Activated naive CD4-positive, alpha-beta T cell treated with anti-CD3 and anti-CD28 coated beads for 36 hours (primary cell): ENCODE measurements at regions of chr1 and their contacts with region 1.

Region 1: DNA sequence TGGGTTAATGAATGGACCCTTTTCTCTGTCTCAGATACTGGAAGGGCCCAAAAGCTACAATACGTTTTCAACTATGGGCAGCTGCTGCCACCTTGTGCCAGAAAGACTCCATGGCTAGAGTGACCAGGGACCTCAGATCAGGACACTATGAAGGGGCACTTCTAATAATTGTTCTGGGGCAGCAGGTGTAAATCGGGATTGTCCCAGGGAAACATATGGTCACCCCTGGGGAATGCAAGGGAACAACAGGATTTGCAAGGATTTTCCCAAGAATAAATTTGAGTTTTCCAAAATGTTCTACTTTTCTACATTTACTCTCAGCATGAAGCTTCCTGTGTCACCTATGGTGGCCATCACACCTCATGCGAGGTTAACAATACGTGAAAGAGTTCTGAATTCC is 12.0 kb upstream of the FCAMR start:
- DNase-seq: peak; percentile 78
- H3K4me3 Mint-ChIP-seq: no peak overlapping the region
- H3K27ac Mint-ChIP-seq: no peak overlapping the region
- H3K4me1 Mint-ChIP-seq: no peaks in the 10 kb centered on the region
- H3K27me3 Mint-ChIP-seq: no peaks in the 10 kb centered on the region

Region 2: GRCh38 chr1:206489980-206490770 is 492.0 kb before region 1 on chr1:
- CTCF ChIA-PET with region 1: interaction called, 3 read pairs
- intact Hi-C with region 1: loop called (anchors 10 kb)
- DNase-seq: peak; percentile 87
- H3K4me3 Mint-ChIP-seq: no peak overlapping the region
- H3K27ac Mint-ChIP-seq: no peak overlapping the region
- H3K4me1 Mint-ChIP-seq: no peaks in the 10 kb centered on the region
- H3K27me3 Mint-ChIP-seq: no peaks in the 10 kb centered on the region

Region 3: GRCh38 chr1:206725109-206725963 is 256.9 kb before region 1 on chr1:
- CTCF ChIA-PET with region 1: interaction called, 12 read pairs
- intact Hi-C with region 1: loop called (anchors 2 kb)
- DNase-seq: peak; percentile 84
- H3K4me3 Mint-ChIP-seq: no peak overlapping the region
- H3K27ac Mint-ChIP-seq: no peak overlapping the region
- H3K4me1 Mint-ChIP-seq: peaks cover 39% of the 10 kb centered on the region
- H3K27me3 Mint-ChIP-seq: no peaks in the 10 kb centered on the region

Region 4: DNA sequence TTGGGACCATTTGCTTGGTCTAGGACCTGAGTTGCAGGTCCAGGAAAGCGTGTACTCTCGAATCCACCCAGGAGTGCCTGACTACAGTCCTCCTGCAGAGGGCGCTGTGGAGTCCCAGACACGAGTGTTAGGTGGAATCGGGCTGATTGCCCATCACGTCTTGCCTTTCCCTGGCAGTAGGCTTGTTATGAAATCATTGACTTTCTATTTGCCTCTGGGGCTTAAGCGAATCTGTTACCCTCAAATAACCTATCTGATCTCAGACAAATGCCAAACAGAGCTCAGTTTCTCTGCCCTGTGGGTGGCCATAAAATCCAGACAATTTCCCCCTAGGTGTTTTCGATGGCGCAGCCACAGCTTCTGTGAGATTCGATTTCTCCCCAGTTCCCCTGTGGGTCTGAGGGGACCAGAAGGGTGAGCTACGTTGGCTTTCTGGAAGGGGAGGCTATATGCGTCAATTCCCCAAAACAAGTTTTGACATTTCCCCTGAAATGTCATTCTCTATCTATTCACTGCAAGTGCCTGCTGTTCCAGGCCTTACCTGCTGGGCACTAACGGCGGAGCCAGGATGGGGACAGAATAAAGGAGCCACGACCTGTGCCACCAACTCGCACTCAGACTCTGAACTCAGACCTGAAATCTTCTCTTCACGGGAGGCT is 117.1 kb before region 1 on chr1 and contains the start of gene IL20:
- CTCF ChIA-PET with region 1: interaction called, 17 read pairs
- intact Hi-C with region 1: loop called (anchors 2 kb)
- DNase-seq: peak; percentile 98
- H3K4me3 Mint-ChIP-seq: no peak within 1 kb of the TSS
- H3K27ac Mint-ChIP-seq: no peak within 1 kb of the TSS
- H3K4me1 Mint-ChIP-seq: peaks cover 30% of the 10 kb centered on the region
- H3K27me3 Mint-ChIP-seq: no peaks in the 10 kb centered on the region
- total RNA-seq, gene IL20: 0.31 TPM in 1 of 2 experiments, not detected in the other

Region 5: GRCh38 chr1:206935491-206936067 is 46.6 kb before region 1 on chr1:
- CTCF ChIA-PET with region 1: interaction called, 124 read pairs
- intact Hi-C with region 1: loop called (anchors 1 kb)
- DNase-seq: peak; percentile 66
- H3K4me3 Mint-ChIP-seq: no peak overlapping the region
- H3K27ac Mint-ChIP-seq: no peak overlapping the region
- H3K4me1 Mint-ChIP-seq: peaks cover 18% of the 10 kb centered on the region
- H3K27me3 Mint-ChIP-seq: no peaks in the 10 kb centered on the region

Region 6: DNA sequence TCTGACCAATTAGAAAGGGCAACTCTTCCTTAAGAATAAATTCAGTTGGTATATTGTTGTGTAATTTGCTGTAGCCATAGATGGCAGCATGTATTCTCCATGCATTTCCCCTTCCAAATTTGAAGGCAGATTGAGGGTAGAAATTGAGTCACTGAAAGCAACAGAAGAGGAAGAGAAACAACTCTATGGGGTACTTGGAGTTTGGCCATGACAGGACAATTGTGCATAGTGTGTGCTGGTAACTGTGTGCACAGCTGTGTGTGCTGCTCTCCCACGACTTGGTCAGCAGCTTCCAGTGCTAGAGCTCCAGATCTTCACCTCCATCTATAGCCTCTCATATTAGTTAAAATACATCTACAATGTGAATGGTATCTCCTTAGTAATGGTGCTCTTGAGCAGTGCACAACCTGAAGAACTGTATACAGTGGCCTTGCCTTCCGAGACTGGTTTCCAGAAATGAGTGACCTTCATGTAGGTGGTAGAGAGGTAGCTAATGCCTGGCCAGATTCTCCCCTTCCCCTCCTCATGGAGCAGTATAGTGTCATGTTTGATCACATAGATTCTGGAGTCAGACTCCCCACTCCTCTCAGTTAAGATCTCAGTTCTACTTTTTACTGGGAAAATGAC is 11.1 kb before region 1 on chr1:
- CTCF ChIA-PET with region 1: interaction called, 38 read pairs
- intact Hi-C with region 1: no loop called
- DNase-seq: no peak
- H3K4me3 Mint-ChIP-seq: no peak overlapping the region
- H3K27ac Mint-ChIP-seq: no peak overlapping the region
- H3K4me1 Mint-ChIP-seq: peaks cover 18% of the 10 kb centered on the region
- H3K27me3 Mint-ChIP-seq: no peaks in the 10 kb centered on the region

Region 7: GRCh38 chr1:207004981-207005830 is 23.0 kb after region 1 on chr1:
- CTCF ChIA-PET with region 1: interaction called, 19 read pairs
- intact Hi-C with region 1: no loop called
- DNase-seq: peak; percentile 62
- H3K4me3 Mint-ChIP-seq: no peak overlapping the region
- H3K27ac Mint-ChIP-seq: no peak overlapping the region
- H3K4me1 Mint-ChIP-seq: peaks cover 2% of the 10 kb centered on the region
- H3K27me3 Mint-ChIP-seq: peaks cover 2% of the 10 kb centered on the region